Activated CD4-positive, alpha-beta memory T cell treated with anti-CD3 and anti-CD28 coated beads, Interleukin-2, amount 10 ng/mL, durations not matched to agents 7 days and 5 days (primary cell): ENCODE measurements at regions of chr2 and their contacts with region 1.

Region 1: GRCh38 chr2:218979846-218980734 is 4.9 kb downstream of the FEV start:
- DNase-seq: peak; percentile 82
- H3K4me3 Mint-ChIP-seq: no peak overlapping the region
- H3K27ac Mint-ChIP-seq: no peak overlapping the region
- H3K4me1 Mint-ChIP-seq: peaks cover 19% of the 10 kb centered on the region
- H3K27me3 Mint-ChIP-seq: peaks cover 74% of the 10 kb centered on the region

Region 2: GRCh38 chr2:218471982-218472381 is 508.1 kb before region 1 on chr2:
- CTCF ChIA-PET with region 1: no interaction called
- POLR2A ChIA-PET with region 1: no interaction called
- DNase-seq: no peak
- H3K4me3 Mint-ChIP-seq: no peak overlapping the region
- H3K27ac Mint-ChIP-seq: no peak overlapping the region
- H3K4me1 Mint-ChIP-seq: peaks cover 19% of the 10 kb centered on the region
- H3K27me3 Mint-ChIP-seq: no peaks in the 10 kb centered on the region

Region 3: GRCh38 chr2:218806346-218806978 is 173.6 kb before region 1 on chr2:
- CTCF ChIA-PET with region 1: no interaction called
- POLR2A ChIA-PET with region 1: no interaction called
- DNase-seq: no peak
- H3K4me3 Mint-ChIP-seq: no peak overlapping the region
- H3K27ac Mint-ChIP-seq: no peak overlapping the region
- H3K4me1 Mint-ChIP-seq: peaks cover 16% of the 10 kb centered on the region
- H3K27me3 Mint-ChIP-seq: peaks cover 34% of the 10 kb centered on the region

Region 4: DNA sequence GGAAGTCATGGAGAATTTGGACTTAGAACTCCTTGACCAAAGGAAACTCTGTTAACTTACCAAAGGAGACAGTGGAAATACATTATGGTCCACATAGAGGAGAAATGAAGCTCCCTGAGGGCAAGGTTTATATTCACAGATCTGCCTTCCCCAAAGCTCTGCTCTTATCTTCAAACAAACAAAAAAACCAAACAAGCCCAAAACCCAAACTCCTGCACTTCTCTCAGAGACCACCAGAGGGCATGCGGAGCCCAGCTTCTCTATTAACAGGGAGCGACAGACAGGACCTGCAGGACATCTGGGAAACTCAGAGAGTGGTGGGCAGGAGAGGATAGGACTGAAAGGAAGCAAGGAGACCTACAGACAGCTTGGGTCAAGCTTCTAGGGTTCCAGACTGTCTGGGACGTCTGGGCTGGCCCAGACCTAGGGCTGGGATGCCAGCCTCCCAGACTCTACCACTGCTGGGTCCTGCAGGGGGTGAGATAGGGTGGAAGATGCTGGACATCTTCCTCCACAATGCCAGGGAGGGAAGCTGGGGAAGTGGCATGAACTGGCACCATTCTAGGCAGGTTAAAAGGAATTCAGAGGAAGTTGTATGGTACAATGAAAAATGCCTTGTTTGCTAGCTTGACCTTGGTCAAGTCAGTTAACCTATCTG is 103.4 kb before region 1 on chr2:
- CTCF ChIA-PET with region 1: interaction called, 12 read pairs
- POLR2A ChIA-PET with region 1: no interaction called
- DNase-seq: peak; percentile 71
- H3K4me3 Mint-ChIP-seq: no peak overlapping the region
- H3K27ac Mint-ChIP-seq: no peak overlapping the region
- H3K4me1 Mint-ChIP-seq: peaks cover 18% of the 10 kb centered on the region
- H3K27me3 Mint-ChIP-seq: peaks cover 73% of the 10 kb centered on the region

Region 5: DNA sequence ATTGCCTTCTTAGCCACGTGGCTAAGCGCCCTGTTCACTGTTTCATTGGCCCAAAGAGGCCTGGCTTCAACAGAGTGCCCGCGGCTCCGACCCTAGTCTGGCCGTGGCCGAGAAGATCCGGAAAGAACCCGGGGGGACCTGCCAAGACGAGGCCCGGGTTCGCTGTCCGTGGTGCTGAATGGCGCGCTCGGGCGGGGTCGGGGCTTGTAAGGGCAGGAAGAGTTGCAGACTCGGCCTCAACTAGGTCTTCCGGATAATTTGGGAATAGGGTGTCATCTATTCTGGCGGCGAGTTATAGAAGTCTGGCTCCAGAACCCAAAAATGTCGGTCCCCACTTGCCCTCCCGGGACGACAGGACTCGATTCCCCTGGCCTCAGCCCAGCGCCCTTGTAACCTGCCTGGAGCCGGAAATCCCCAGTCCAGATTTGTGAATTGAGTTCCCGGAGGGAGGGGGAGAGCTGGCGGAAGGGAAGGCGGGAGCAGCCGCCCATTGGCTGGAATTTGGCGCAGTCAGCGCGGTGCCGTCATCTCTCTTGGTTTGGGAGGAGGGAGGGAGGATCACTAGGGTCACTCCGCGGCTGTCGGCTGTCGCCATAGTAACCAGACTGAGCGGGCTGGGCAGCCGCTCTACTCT is 17.1 kb before region 1 on chr2:
- CTCF ChIA-PET with region 1: interaction called, 29 read pairs
- POLR2A ChIA-PET with region 1: interaction called, 3 read pairs
- DNase-seq: peak; percentile 61
- H3K4me3 Mint-ChIP-seq: no peak overlapping the region
- H3K27ac Mint-ChIP-seq: no peak overlapping the region
- H3K4me1 Mint-ChIP-seq: peaks cover 15% of the 10 kb centered on the region
- H3K27me3 Mint-ChIP-seq: peaks cover 63% of the 10 kb centered on the region

Region 6: DNA sequence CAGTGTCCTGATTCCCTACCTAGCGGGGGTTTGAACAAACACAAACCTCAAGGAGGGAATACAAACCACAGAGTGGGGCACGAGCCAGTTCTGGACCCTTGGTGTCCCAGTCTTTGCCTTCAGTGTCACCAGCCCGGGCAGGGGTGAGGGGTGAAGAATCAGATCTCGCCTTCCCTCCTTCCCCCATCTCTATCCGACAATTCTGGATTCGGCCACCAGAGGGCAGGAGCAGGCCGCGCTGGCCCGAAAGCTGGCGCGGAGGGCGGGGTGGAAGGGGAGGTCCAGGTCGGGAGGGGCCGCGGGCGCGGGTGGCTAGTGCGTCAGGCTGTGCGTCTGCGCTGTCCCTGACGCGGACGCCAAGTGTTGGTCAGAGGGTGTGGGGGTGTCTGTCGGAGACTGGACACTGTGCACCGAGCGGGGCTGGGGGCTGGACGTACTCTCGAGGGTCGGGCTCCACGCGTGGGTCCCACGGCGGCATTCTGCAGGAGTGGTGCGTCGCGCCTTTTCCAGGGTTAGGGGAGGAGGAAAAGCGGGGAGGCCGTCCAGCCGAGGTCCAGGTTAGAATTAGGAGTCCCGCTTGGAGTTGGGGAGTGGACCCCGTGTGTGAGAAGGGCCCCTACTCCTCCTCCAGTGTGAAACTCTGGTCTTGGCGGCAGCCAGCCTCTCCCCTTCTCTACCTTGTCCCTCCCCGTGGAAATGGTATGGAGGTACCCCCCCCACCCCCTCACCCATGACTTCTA is 16.1 kb after region 1 on chr2:
- CTCF ChIA-PET with region 1: interaction called, 51 read pairs
- POLR2A ChIA-PET with region 1: interaction called, 3 read pairs
- DNase-seq: peak; percentile 74
- H3K4me3 Mint-ChIP-seq: no peak overlapping the region
- H3K27ac Mint-ChIP-seq: no peak overlapping the region
- H3K4me1 Mint-ChIP-seq: peaks cover 8% of the 10 kb centered on the region
- H3K27me3 Mint-ChIP-seq: peaks cover 81% of the 10 kb centered on the region

Region 7: DNA sequence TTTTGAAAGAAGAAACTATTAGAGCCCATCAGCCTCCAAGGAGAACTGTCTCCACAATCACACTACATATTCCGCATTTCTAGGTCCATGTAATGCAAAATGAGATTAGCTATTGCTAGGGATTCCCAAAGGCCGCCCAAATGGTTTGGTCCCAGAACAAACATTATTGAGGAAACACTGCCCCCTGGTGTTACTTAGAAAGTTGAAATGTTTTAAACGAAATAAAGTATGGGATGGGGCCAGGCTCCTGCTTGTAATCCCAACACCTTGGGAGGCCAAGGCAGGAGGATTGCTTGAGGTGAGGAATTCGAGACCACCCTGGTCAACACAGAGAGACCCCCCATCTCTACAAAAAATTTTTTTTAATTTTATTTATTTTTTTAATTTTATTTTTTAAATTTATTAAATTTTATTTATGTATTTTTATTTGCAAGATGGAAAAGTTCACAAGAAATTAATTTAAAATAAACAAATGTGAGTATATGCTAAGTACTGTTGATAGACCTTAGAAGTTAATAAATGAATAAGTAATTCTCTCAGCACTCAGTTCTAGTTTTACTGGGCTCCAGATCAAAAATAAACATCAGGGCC is 175.1 kb after region 1 on chr2:
- CTCF ChIA-PET with region 1: interaction called, 12 read pairs
- POLR2A ChIA-PET with region 1: no interaction called
- DNase-seq: peak; percentile 27
- H3K4me3 Mint-ChIP-seq: no peak overlapping the region
- H3K27ac Mint-ChIP-seq: no peak overlapping the region
- H3K4me1 Mint-ChIP-seq: peaks cover 9% of the 10 kb centered on the region
- H3K27me3 Mint-ChIP-seq: no peaks in the 10 kb centered on the region